Left ventricle myocardium inferior (tissue), 1 donor: ENCODE measurements at regions of chr12 and their contacts with region 1.

Region 1: GRCh38 chr12:22083167-22083566 is 37.1 kb downstream of the CMAS start:
- DNase-seq: no peak
- H3K4me3 ChIP-seq: no peak overlapping the region
- H3K27ac ChIP-seq: no peak overlapping the region
- H3K4me1 ChIP-seq: no peaks in the 10 kb centered on the region
- H3K27me3 ChIP-seq: no peaks in the 10 kb centered on the region
- CTCF ChIP-seq: peak; percentile 64

Region 2: GRCh38 chr12:22014783-22015144 is 68.4 kb before region 1 on chr12:
- intact Hi-C with region 1: no loop called
- DNase-seq: no peak
- H3K4me3 ChIP-seq: no peak overlapping the region
- H3K27ac ChIP-seq: peak overlapping the region; percentile 60
- H3K4me1 ChIP-seq: peaks cover 12% of the 10 kb centered on the region
- H3K27me3 ChIP-seq: no peaks in the 10 kb centered on the region
- CTCF ChIP-seq: no peak

Region 3: GRCh38 chr12:22180705-22181104 is 97.5 kb after region 1 on chr12:
- intact Hi-C with region 1: no loop called
- DNase-seq: no peak
- H3K4me3 ChIP-seq: no peak overlapping the region
- H3K27ac ChIP-seq: no peak overlapping the region
- H3K4me1 ChIP-seq: no peaks in the 10 kb centered on the region
- H3K27me3 ChIP-seq: no peaks in the 10 kb centered on the region
- CTCF ChIP-seq: no peak

Region 4: DNA sequence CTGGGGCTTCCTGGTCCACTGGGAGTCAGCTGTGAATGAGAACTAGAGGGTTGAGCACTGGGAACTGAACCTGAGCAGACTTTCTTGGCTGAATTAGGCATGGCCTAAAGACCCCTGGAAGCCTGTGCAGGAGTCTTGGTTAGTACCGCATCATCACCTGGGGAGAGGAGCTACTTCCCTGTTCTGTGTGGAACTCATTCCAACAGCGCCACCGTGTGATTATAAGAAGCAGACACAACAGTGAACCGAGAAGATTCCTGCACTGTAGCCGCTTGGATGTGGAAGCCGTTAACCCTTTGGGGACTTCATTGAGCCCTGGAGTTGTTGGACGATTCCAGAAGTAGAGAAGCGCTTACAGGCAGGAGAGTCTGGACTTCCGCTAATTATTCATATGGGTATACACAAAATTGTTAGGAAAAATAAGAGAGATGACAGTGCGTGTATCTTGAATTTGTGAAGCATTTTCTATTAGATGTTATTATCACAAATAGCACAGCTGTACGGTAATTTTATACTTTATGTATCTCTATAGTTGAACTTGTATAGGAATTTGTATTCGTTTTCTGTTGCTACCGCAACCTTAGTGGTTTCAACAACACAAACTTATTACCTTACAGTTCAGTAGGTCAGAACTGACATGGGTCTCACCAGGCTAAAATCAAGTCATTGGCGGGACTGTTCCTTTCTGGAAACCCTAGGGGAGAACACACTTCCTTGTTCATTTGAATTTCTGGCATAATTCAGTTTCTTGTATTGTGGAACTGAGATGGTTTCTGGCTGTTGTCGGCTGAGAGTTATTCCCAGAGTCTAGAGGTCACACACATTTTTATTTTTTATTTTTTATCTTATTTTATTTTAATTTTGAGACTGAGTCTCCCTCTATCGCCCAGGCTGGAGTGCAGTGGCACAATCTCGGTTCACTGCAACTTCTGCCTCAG is 360.5 kb after region 1 on chr12:
- intact Hi-C with region 1: loop called (anchors 10 kb)
- DNase-seq: no peak
- H3K4me3 ChIP-seq: peak overlapping the region; percentile 22
- H3K27ac ChIP-seq: no peak overlapping the region
- H3K4me1 ChIP-seq: no peaks in the 10 kb centered on the region
- H3K27me3 ChIP-seq: no peaks in the 10 kb centered on the region
- CTCF ChIP-seq: peak; percentile 82